ENCODE measurements at regions of chr10 and their contacts with region 1.

Region 1: GRCh38 chr10:122298598-122299301 is 27.7 kb downstream of the BTBD16 start:
- DNase-seq: no peak
- H3K4me3 ChIP-seq: peak overlapping the region; percentile 10; the same call in 1 of the 2 replicates
- H3K27me3 ChIP-seq: peaks cover 6% of the 10 kb centered on the region
- CTCF ChIP-seq: peak; percentile 88

Region 2: GRCh38 chr10:122267849-122268737 is 30.7 kb before region 1 on chr10:
- CTCF ChIA-PET with region 1: interaction called, 12 read pairs
- POLR2A ChIA-PET with region 1: no interaction called
- DNase-seq: no peak
- H3K4me3 ChIP-seq: no peak overlapping the region
- H3K27me3 ChIP-seq: no peaks in the 10 kb centered on the region
- CTCF ChIP-seq: peak; percentile 98

Region 3: DNA sequence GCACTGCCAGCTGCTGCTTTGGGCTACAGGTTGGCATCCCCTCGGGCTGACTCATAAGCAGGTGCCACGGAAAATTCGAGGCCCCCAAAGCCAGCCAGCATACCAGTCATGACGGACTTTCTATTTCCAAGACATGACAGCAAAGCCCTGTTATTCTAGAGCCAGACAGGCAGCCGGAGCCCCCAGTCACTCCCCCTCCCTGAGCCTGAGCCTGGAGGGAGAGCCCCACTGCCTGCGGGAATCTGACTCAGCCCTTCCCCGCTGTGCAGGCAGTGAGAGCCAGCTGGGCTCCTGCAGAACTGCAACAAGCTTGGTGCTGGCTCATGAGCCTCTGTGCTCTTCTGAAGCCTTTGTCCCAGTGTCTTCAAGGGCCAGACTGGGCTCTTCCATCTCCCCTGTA is 11.9 kb before region 1 on chr10:
- CTCF ChIA-PET with region 1: interaction called, 25 read pairs
- POLR2A ChIA-PET with region 1: no interaction called
- DNase-seq: no peak
- H3K4me3 ChIP-seq: no peak overlapping the region
- H3K27me3 ChIP-seq: peaks cover 1% of the 10 kb centered on the region
- CTCF ChIP-seq: no peak

Region 4: DNA sequence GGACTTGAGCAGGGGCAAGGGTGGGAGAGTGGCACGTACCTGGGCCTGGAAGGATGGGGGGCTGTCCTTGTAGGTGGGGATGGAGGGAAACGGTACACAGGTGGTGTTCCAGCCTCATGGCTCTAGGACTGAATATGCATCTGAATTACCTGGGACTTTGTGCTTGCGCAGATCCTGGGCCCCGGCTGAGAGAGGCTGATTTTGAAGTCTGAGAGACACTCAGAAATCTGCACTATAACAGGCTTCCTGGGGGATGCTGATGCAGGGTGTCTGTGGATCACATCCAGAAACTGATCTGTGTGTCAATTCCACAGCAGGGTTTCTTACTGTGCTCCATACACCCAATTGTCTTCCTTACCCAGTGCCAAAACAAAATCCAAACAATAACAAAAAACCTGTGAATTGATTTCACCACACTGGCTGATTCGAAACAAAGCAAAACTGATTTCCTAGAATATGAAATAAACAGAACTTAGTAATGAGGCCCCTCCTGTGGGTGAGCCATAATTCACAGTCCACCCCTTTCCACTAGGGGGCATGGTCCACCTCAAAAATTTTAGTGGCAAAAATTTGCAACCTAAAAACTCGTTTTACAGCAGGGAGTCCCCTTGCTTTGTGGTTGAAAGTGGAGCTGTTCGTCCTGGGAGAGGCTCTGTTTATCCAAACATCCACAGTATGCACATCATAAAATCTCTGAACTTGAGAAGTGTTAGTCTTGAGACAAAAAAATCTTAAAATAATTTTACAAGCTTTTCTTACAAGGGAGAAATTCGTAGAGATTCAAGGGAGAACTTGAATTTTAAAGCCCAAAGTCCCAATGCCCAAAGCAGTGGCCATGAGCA is 43.8 kb after region 1 on chr10:
- CTCF ChIA-PET with region 1: interaction called, 25 read pairs
- POLR2A ChIA-PET with region 1: no interaction called
- DNase-seq: peak; percentile 49
- H3K4me3 ChIP-seq: no peak overlapping the region
- H3K27me3 ChIP-seq: no peaks in the 10 kb centered on the region
- CTCF ChIP-seq: peak; percentile 83

Region 5: DNA sequence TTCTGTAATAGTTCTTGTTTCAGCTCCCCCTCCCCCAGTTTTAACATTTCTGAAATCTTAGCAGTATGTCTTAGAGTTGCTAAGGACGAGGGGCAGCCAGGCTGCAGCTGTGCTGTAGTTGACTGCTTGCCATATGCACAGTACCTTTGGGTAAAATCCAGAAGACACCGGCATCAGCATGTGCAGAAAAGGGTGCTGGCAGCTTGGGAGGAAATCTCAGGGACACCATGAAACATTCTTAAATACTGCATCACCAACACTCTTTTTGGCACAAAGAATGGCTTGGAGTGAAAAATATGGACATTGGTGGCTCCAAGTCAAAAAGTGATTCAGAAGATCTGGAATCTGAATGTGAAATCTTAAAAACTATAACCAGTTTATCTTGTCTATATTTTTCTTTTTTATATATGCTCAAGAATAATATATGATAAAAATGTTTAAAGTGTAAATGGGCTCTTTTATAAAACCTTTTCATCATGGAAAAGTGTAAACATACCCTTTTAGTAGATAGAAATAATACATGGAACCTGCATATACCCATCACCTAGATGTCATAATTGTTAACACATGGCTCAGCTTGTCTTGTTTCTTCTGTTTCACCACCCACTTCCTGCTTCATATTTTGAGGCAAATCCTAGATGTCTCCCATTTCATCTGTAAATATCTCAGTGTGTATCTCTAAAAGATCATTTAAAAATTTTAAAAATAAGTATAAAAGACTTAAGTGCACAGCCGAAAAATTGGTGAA is 121.3 kb after region 1 on chr10:
- CTCF ChIA-PET with region 1: interaction called, 11 read pairs
- POLR2A ChIA-PET with region 1: no interaction called
- DNase-seq: peak; percentile 68
- H3K4me3 ChIP-seq: no peak overlapping the region
- H3K27me3 ChIP-seq: no peaks in the 10 kb centered on the region
- CTCF ChIP-seq: no peak

Region 6: GRCh38 chr10:122435212-122435827 is 136.6 kb after region 1 on chr10:
- CTCF ChIA-PET with region 1: interaction called, 73 read pairs
- POLR2A ChIA-PET with region 1: no interaction called
- DNase-seq: no peak
- H3K4me3 ChIP-seq: no peak overlapping the region
- H3K27me3 ChIP-seq: no peaks in the 10 kb centered on the region
- CTCF ChIP-seq: peak; percentile 32

Region 7: DNA sequence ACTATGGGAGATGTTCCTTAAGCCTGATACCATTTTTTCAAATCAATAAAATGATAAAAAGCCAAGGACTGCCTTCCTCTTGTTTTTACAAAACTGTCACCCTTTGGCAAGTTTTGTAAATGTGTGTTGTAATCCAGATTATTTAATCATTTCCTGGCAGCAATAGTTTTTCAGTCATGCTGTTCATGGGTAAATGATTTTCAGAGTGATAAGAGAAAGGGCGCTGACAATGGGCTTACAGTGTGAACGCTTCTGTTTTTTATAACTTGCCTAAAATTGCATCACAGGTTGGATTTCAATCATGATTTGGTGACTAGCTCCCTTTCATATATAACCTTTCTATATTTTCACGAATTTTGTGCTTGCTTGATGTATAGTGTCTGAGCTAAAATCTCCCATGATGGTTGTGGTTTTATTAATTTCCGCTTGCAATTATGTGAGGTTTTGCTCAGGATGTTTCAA is 242.8 kb after region 1 on chr10:
- CTCF ChIA-PET with region 1: no interaction called
- POLR2A ChIA-PET with region 1: no interaction called
- DNase-seq: no peak
- H3K4me3 ChIP-seq: no peak overlapping the region
- H3K27me3 ChIP-seq: peaks cover 2% of the 10 kb centered on the region; the same call in 1 of the 2 replicates
- CTCF ChIP-seq: no peak

Region 8: GRCh38 chr10:122565728-122566206 is 267.0 kb after region 1 on chr10:
- CTCF ChIA-PET with region 1: interaction called, 49 read pairs
- POLR2A ChIA-PET with region 1: no interaction called
- DNase-seq: peak; percentile 24
- H3K4me3 ChIP-seq: no peak overlapping the region
- H3K27me3 ChIP-seq: peaks cover 7% of the 10 kb centered on the region; the same call in 1 of the 2 replicates
- CTCF ChIP-seq: peak; percentile 89

Measured in BJ (cell line).